H1 (cell line): ENCODE measurements at regions of chr6 and their contacts with region 1.

Region 1: DNA sequence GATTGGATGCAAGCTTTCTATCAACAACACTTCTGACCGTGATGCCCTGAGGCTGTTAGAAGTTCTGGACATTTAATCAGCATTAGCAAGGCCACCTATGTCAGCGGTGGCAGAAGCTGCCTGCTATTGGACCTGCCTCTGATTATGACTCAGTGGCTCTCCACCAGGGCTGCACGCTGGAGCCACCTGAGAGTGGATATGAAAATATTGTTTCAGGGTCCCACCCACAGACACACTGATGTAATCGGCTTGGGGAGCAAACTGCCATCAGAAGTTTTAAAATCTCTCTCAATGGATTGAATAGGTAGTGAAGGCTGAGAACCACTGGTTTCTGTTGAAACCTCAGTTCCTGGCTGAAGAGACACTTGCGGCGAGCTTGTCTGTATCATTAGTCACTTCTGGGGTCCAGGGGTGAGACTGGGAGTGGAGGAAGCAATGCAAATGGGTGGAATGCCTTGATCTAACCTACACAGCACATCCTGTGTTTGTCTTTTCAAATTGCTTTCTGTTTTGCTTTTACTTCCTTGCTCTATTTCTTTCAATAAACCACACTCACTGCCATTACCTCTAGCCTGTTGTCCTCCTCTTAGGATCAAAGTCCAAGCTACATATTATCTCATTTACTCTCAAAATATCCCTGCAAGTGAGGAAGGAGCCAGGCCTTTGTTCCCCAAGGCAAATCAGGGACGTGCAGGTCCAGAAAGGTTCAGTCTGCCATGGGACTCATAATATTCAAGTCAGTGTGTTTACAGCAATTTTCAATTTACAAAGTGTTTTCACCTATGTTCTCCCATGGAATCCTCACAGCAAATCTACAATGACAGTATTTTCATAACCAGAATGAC is 4.2 kb downstream of the CLIC5 start:
- DNase-seq: no peak
- H3K4me3 ChIP-seq: no peak overlapping the region
- H3K27ac ChIP-seq: no peak overlapping the region
- H3K4me1 ChIP-seq: peaks cover 4 to 15% (median 8%) of the 10 kb centered on the region in 4 experiments; a peak in 4 of 7 replicates
- H3K27me3 ChIP-seq: peaks cover 10 to 21% (median 17%) of the 10 kb centered on the region in 4 experiments
- CTCF ChIP-seq: no peak
- EP300 ChIP-seq: no peak
- POLR2A ChIP-seq: no peak
- RAD21 ChIP-seq: no peak

Region 2: DNA sequence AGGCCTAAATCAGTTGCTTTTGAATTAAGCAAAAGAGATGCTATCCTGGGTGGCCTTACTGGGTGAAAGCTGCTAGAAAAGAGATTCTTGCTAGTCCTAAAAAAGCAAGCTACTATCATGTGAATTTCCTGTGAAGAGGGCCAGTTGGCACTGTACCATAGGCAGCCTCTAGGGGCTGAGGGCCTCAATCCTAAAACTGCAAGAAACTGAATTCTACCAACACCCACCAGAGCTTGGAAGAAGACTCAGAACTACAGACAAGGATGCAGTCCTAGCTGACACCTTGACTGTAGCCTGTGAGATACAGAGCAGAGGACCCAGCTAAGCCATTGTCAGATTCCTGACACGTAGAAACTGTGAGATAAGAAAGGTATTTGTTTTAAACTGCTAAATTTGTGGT is 20.3 kb before region 1 on chr6:
- CTCF ChIA-PET with region 1: interaction called, 18 read pairs
- POLR2A ChIA-PET with region 1: interaction called, 4 read pairs
- DNase-seq: no peak
- H3K4me3 ChIP-seq: no peak overlapping the region
- H3K27ac ChIP-seq: no peak overlapping the region
- H3K4me1 ChIP-seq: no peaks in the 10 kb centered on the region
- H3K27me3 ChIP-seq: no peaks in the 10 kb centered on the region
- CTCF ChIP-seq: peak in 2 of 3 experiments; percentile 34 to 67; a peak in 3 of 4 replicates
- EP300 ChIP-seq: no peak
- POLR2A ChIP-seq: no peak
- RAD21 ChIP-seq: peak; percentile 18 to 47; a peak in 3 of 4 replicates

Region 3: GRCh38 chr6:46772762-46773161 is 761.3 kb after region 1 on chr6:
- CTCF ChIA-PET with region 1: no interaction called
- POLR2A ChIA-PET with region 1: no interaction called
- DNase-seq: no peak
- H3K4me3 ChIP-seq: no peak overlapping the region
- H3K27ac ChIP-seq: no peak overlapping the region
- H3K4me1 ChIP-seq: no peaks in the 10 kb centered on the region
- H3K27me3 ChIP-seq: no peaks in the 10 kb centered on the region
- CTCF ChIP-seq: no peak
- EP300 ChIP-seq: no peak
- POLR2A ChIP-seq: no peak
- RAD21 ChIP-seq: no peak